Heart left ventricle (tissue), 16 donors: ENCODE measurements at regions of chr12 and their contacts with region 1.

Region 1: DNA sequence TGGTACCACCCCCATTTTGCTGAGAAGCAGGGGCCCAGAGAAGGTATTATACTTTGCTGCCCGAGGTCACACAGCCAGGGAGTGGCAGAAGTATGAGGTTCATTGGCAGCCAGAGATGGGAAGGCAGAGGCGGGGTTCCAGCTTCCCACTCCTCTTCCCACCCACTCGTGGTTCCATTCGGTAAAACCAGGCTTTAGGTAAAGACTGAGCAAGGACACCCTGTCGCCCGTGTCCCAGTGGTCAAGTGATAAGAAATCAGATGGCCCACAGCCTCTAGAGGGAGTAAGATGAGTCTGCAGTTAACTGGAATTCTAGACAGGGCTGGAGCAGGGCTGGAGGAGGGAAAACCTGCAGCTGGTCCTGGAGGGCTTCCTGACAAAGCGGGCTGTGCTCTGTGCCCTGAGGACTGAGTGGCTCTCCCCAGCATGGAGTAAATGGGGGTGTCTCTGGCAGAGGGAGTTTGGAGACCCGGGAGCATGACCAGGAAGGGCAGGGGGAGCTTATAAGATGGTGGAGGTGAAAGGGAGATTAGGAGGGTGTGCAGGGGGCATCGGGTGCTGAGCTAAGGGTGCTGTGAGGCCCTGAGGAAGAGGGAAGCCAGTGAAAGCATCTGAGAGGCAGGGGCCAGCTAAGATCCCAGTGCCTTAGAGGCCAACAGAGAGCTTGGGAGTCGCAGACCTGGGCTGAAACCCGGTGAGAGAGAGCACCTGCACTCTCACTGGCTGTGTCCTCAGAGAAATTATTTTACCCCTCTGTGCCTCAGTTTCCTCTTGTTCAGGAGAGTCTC is 5.8 kb downstream of the FAM222A start:
- DNase-seq: no peak
- ATAC-seq: no peak
- H3K4me3 ChIP-seq: no peak overlapping the region
- H3K27ac ChIP-seq: peak overlapping the region in 11 of 12 donors; percentile 77 to 96 (median 86)
- H3K4me1 ChIP-seq: peaks cover 4 to 92% (median 41%) of the 10 kb centered on the region in 12 donors
- H3K27me3 ChIP-seq: peaks cover 0 to 22% (median 0%) of the 10 kb centered on the region in 9 donors
- CTCF ChIP-seq: peak in 1 of 12 donors; percentile 10
- POLR2A ChIP-seq: no peak

Region 2: GRCh38 chr12:109736552-109737108 is 17.2 kb after region 1 on chr12:
- intact Hi-C with region 1: no loop called
- DNase-seq: peak; percentile 18 to 59 (median 30)
- ATAC-seq: peak; percentile 29 to 70 (median 64)
- H3K4me3 ChIP-seq: no peak overlapping the region
- H3K27ac ChIP-seq: no peak overlapping the region
- H3K4me1 ChIP-seq: peaks cover 0 to 26% (median 6%) of the 10 kb centered on the region in 12 donors
- H3K27me3 ChIP-seq: peaks cover 0 to 6% (median 0%) of the 10 kb centered on the region in 9 donors
- CTCF ChIP-seq: no peak
- POLR2A ChIP-seq: no peak

Region 3: GRCh38 chr12:109763201-109763841 is 43.9 kb after region 1 on chr12:
- intact Hi-C with region 1: loop called in 1 of 10 experiments (anchors 5 kb)
- DNase-seq: peak in 1 of 5 donors; percentile 10
- ATAC-seq: no peak
- H3K4me3 ChIP-seq: no peak overlapping the region
- H3K27ac ChIP-seq: no peak overlapping the region
- H3K4me1 ChIP-seq: peaks cover 0 to 21% (median 2%) of the 10 kb centered on the region in 12 donors
- H3K27me3 ChIP-seq: no peaks in the 10 kb centered on the region
- CTCF ChIP-seq: no peak
- POLR2A ChIP-seq: no peak

Region 4: GRCh38 chr12:109775172-109775881 is 55.9 kb after region 1 on chr12:
- intact Hi-C with region 1: loop called in 6 of 10 experiments (anchors 5 kb)
- DNase-seq: peak; percentile 67 to 84 (median 68)
- ATAC-seq: peak; percentile 75 to 86 (median 80)
- H3K4me3 ChIP-seq: no peak overlapping the region
- H3K27ac ChIP-seq: no peak overlapping the region
- H3K4me1 ChIP-seq: peaks cover 0 to 16% (median 0%) of the 10 kb centered on the region in 12 donors
- H3K27me3 ChIP-seq: peaks cover 0 to 2% (median 0%) of the 10 kb centered on the region in 9 donors
- CTCF ChIP-seq: peak; percentile 78 to 96 (median 86)
- POLR2A ChIP-seq: no peak

Region 5: DNA sequence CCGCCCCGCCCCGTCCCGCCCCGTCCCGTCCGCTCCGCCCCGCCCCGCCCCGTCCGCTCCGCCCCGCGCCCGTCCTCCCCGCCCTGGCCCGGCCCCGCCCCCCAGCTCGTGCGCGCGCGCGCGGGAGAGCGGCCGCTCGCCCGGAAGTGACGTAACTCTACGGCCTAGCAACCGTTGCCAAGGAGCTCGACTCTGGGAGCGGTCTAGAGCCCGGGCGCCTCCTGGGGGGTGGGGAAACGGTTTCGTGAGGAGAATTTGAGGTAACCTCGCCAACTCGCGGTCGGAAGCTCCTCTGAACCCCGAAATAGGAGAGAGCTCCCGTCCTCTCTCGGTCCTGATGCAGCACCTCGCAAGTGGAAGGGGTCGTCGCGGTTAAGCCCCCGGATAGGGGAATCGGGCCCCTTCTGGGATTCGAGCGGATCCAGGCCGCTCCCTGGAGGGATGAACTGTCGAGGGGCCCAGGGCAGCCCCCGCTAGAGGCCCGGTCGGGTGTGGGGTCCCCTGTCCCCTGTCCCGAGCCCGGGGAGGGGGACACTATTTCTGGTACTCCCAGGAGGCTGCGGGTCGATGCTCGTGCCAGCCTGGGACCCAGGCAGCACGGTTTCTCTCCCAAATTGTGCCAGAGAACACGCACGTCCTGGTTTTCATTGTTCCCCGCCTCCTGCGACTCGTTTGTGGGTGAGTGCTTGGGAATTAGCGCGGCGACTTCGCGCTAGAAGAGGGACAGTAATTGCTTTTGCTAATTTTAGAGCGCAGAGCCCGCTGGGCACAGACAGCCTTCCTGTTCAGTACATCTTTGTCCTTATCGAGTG is 405.0 kb after region 1 on chr12 and contains the start of gene IFT81:
- intact Hi-C with region 1: no loop called
- DNase-seq: peak; percentile 96 to 98 (median 96)
- ATAC-seq: peak; percentile 96 to 98 (median 97)
- H3K4me3 ChIP-seq: peak within 1 kb of the TSS; percentile 71 to 99 (median 92)
- H3K27ac ChIP-seq: peak within 1 kb of the TSS; percentile 79 to 94 (median 90)
- H3K4me1 ChIP-seq: peaks cover 0 to 21% (median 7%) of the 10 kb centered on the region in 12 donors
- H3K27me3 ChIP-seq: no peaks in the 10 kb centered on the region
- CTCF ChIP-seq: peak in 3 of 12 donors; percentile 6 to 10 (median 8)
- POLR2A ChIP-seq: peak in 1 of 2 donors; percentile 45
- total RNA-seq, gene IFT81: 6.1 to 9.8 (median 8.9) TPM